Activated CD8-positive, alpha-beta T cell treated with anti-CD3 and anti-CD28 coated beads for 36 hours (primary cell): ENCODE measurements at regions of chr6 and their contacts with region 1.

Region 1: GRCh38 chr6:3026791-3027626 is 27.3 kb downstream of the NQO2 start:
- DNase-seq: peak; percentile 51
- ATAC-seq: peak; percentile 11
- H3K4me3 Mint-ChIP-seq: peak overlapping the region; percentile 47
- H3K27ac Mint-ChIP-seq: peak overlapping the region; percentile 80
- H3K4me1 Mint-ChIP-seq: peaks cover 44% of the 10 kb centered on the region
- H3K27me3 Mint-ChIP-seq: peaks cover 3% of the 10 kb centered on the region
- CTCF ChIP-seq: no peak

Region 2: DNA sequence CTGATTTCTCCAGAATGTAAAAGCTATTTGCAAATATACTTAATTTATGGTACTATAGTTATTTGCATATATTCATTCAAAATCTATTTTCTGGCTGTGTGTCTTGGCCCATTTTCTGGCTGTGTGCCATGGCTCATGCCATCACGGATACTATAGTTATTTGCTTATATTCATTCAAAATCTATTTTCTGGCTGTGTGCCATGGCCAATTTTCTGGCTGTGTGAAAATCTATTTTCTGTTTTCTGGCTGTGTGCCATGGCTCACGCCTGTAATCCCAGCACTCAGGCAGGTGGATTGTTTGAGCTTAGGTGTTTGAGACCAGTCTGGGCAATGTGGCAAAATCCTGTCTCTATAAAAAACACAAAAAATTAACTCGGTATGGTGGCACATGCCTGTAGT is 12.4 kb after region 1 on chr6:
- CTCF ChIA-PET with region 1: interaction called, 10 read pairs
- POLR2A ChIA-PET with region 1: interaction called, 3 read pairs
- intact Hi-C with region 1: no loop called
- DNase-seq: no peak
- ATAC-seq: no peak
- H3K4me3 Mint-ChIP-seq: no peak overlapping the region
- H3K27ac Mint-ChIP-seq: no peak overlapping the region
- H3K4me1 Mint-ChIP-seq: no peaks in the 10 kb centered on the region
- H3K27me3 Mint-ChIP-seq: no peaks in the 10 kb centered on the region
- CTCF ChIP-seq: no peak